Heart right ventricle (tissue), 16 donors: ENCODE measurements at regions of chr4 and their contacts with region 1.

Region 1: GRCh38 chr4:40976343-40976742 is 226.6 kb downstream of the NSUN7 start:
- DNase-seq: peak in 1 of 2 donors; percentile 59
- ATAC-seq: peak in 4 of 8 donors; percentile 31 to 71 (median 64)
- H3K4me3 ChIP-seq: no peak overlapping the region
- H3K27ac ChIP-seq: peak overlapping the region in 1 of 10 donors; percentile 15
- H3K4me1 ChIP-seq: peaks cover 0 to 9% (median 0%) of the 10 kb centered on the region in 9 donors
- H3K27me3 ChIP-seq: no peaks in the 10 kb centered on the region
- CTCF ChIP-seq: peak; percentile 63 to 89 (median 78)

Region 2: GRCh38 chr4:39476187-39476895 is 1500.0 kb before region 1 on chr4:
- intact Hi-C with region 1: no loop called
- DNase-seq: no peak
- ATAC-seq: no peak
- H3K4me3 ChIP-seq: no peak overlapping the region
- H3K27ac ChIP-seq: no peak overlapping the region
- H3K4me1 ChIP-seq: no peaks in the 10 kb centered on the region
- H3K27me3 ChIP-seq: no peaks in the 10 kb centered on the region
- CTCF ChIP-seq: no peak

Region 3: DNA sequence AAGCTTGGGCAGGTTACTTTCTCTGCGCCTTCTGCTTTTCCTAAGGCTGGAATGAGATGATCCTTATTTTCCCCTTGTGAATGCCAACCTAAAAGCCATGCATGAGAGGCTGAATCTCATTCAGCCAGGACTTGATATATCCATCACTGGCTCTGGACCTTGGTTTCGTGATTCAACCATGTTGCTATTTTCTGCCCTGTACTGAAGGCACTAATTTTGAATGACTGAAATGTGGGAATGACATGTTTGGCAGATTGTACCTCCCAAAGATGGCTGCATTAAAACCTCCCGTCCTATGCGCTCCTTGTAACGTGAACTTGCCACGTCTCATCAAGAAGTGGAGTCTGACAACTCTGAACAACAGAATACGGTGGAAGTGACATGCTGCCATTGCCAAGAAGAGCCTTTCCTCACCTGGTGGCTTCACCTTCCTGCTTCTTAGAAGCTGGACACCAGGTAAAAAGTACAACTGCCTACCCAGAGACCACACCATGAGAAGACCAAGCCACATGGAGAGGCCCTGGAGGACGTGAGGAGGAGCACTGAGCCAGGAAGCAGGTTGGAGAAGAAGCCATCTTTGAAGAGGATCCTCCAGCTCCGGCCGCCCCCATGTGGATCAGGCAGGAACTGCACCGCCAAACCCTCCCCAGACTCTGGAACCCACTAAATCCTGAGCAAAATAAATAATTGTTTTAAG is 52.1 kb before region 1 on chr4:
- intact Hi-C with region 1: loop called in 4 of 10 experiments (anchors 5 kb)
- DNase-seq: peak; percentile 35 to 66
- ATAC-seq: peak in 7 of 8 donors; percentile 52 to 60 (median 54)
- H3K4me3 ChIP-seq: no peak overlapping the region
- H3K27ac ChIP-seq: peak overlapping the region in 1 of 10 donors; percentile 24
- H3K4me1 ChIP-seq: peaks cover 0 to 19% (median 5%) of the 10 kb centered on the region in 9 donors
- H3K27me3 ChIP-seq: no peaks in the 10 kb centered on the region
- CTCF ChIP-seq: peak; percentile 74 to 95 (median 79)

Region 4: DNA sequence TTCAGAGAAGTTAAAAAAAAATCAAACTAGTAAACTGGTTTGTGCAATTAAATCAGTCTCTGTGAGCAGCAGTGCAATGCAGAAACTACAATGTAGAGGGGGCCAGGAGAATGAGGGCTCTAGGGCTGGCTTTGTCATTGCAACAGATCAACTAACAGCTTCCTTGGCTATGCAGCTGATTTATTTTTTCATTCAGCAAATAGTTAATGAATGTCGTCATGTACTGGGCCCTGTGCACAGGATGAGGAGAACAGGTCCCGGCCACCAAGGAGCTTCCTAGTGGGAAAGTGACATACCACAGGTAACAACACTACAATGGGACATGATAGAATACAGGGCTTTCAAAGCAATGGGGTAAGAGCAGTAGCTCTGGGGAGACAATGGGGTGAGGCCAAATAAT is 36.5 kb before region 1 on chr4:
- intact Hi-C with region 1: loop called in 3 of 10 experiments (anchors 5 kb)
- DNase-seq: no peak
- ATAC-seq: peak in 6 of 8 donors; percentile 4 to 43 (median 13)
- H3K4me3 ChIP-seq: no peak overlapping the region
- H3K27ac ChIP-seq: peak overlapping the region in 4 of 10 donors; percentile 13 to 72 (median 42)
- H3K4me1 ChIP-seq: peaks cover 2 to 68% (median 18%) of the 10 kb centered on the region in 9 donors
- H3K27me3 ChIP-seq: no peaks in the 10 kb centered on the region
- CTCF ChIP-seq: no peak

Region 5: GRCh38 chr4:41050866-41051775 is 74.8 kb after region 1 on chr4:
- intact Hi-C with region 1: loop called in 1 of 10 experiments (anchors 5 kb)
- DNase-seq: peak in 1 of 2 donors; percentile 57
- ATAC-seq: peak; percentile 56 to 92 (median 87)
- H3K4me3 ChIP-seq: peak overlapping the region in 7 of 10 donors; percentile 3 to 49 (median 38)
- H3K27ac ChIP-seq: peak overlapping the region; percentile 64 to 94 (median 78)
- H3K4me1 ChIP-seq: peaks cover 4 to 62% (median 17%) of the 10 kb centered on the region in 9 donors
- H3K27me3 ChIP-seq: no peaks in the 10 kb centered on the region
- CTCF ChIP-seq: no peak